SK-N-SH (cell line): ENCODE measurements at regions of chr17 and their contacts with region 1.

Region 1: DNA sequence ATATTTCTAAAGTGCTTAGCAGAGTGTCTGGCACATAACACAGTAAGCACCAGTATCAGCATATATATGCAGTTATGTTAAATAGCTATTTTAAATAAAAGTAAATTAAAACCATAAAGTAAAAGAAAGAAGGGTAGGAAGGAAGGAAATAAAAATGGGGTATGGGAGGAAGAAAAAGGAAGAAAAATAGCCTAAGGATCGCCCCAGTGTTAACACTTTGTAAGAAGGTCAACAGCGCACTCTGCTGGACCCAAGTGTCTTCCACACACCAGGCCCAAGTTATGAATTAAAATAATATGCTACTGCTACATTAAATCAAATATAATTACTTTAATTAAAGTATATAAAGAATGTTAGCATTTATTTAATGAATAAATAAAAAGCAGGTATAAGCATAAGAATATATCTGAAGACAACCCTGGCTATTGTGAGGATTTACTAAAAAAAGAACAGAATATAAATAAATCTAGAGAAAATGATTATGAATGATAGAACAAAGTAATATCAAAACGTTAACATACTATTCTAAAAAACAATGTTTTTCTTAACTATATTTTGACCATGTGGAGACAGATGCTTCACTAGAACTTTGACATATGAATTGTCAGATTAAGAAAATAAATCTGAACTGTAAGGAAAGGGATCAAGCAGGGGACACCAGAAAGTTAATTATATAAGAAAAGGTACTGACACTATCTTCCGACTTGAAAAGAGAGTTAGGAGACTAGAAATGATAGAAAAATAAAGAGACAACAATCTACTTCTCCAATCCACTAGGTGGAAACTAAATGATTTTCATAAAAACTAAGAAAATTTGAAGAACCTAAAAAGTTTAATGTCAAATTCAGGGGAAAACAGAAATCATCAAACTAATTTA is 25.9 kb downstream of the BRIP1 start:
- DNase-seq: peak; percentile 59
- H3K4me3 ChIP-seq: no peak overlapping the region
- H3K27ac ChIP-seq: no peak overlapping the region; a peak in 1 of 4 replicates
- H3K4me1 ChIP-seq: peaks cover 0 to 3% of the 10 kb centered on the region in 2 experiments; a peak in 2 of 4 replicates
- H3K27me3 ChIP-seq: no peaks in the 10 kb centered on the region
- CTCF ChIP-seq: peak; percentile 95
- EP300 ChIP-seq: no peak
- RAD21 ChIP-seq: peak; percentile 97

Region 2: DNA sequence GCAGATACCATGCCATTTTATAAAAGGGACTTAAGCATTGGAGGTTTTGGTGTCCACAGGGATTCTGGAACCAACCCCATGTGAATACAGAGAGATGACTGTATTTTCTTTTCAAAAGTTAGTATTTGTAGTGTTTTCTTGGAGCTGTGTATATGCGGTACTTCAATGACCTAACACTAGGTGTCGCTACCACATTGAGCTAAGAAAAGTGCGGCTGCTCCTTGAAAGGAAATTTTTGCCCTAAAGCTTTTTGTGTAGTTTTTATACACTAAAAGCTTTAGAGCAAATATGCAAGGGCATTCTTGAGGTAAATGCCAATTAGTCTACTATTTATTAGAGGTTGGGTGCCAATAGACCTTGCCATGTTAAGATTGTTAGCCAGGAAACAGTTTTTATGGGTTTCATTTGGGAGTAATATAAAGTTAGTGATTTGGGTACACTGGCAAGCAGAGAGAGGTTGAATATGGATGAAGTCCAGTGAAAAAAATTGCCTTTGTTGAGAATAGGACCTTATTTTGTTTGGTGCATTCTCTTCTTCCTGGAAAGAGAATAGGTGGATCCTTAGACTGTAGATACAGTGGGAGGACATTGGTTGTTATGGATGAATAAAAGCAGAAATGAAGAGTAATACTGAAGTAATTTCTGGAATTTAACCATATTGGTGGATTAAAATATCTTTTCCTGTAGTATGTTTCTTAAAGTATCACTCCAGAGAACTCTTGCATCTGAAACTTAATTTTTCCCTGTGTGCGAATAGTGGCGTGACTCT is 1116.5 kb before region 1 on chr17:
- CTCF ChIA-PET with region 1: interaction called, 14 read pairs
- POLR2A ChIA-PET with region 1: no interaction called
- DNase-seq: peak; percentile 66
- H3K4me3 ChIP-seq: peak overlapping the region in 1 of 2 experiments; percentile 25; a peak in 2 of 4 replicates
- H3K27ac ChIP-seq: peak overlapping the region; percentile 8 to 51; a peak in 2 of 4 replicates
- H3K4me1 ChIP-seq: peaks cover 0 to 5% of the 10 kb centered on the region in 2 experiments; a peak in 2 of 4 replicates
- H3K27me3 ChIP-seq: no peaks in the 10 kb centered on the region
- CTCF ChIP-seq: peak; percentile 100
- EP300 ChIP-seq: no peak
- RAD21 ChIP-seq: peak; percentile 98

Region 3: GRCh38 chr17:61635913-61636432 is 201.4 kb before region 1 on chr17:
- CTCF ChIA-PET with region 1: interaction called, 23 read pairs
- POLR2A ChIA-PET with region 1: no interaction called
- DNase-seq: peak; percentile 28
- H3K4me3 ChIP-seq: no peak overlapping the region
- H3K27ac ChIP-seq: no peak overlapping the region
- H3K4me1 ChIP-seq: no peaks in the 10 kb centered on the region
- H3K27me3 ChIP-seq: no peaks in the 10 kb centered on the region
- CTCF ChIP-seq: peak; percentile 93
- EP300 ChIP-seq: no peak
- RAD21 ChIP-seq: peak; percentile 97

Region 4: DNA sequence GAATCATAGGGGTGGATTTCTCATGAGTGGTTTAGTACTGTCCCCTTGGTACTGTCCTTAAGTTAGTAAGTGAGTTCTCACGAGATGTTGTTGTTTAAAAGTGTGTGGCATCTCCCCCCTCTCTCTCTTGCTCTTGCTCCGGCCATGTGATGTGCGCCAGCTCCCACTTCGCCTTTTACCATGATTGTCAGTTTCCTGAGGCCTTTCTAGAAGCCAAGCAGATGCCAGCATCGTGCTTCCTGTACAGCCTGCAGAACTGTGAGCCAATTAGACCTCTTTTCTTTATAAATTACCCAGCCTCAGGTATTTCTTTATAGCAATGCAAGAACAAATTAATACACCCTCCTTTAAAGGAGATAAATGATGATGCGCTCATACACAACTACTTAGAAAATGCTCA is 196.3 kb before region 1 on chr17:
- CTCF ChIA-PET with region 1: interaction called, 23 read pairs
- POLR2A ChIA-PET with region 1: no interaction called
- DNase-seq: no peak
- H3K4me3 ChIP-seq: no peak overlapping the region
- H3K27ac ChIP-seq: no peak overlapping the region
- H3K4me1 ChIP-seq: no peaks in the 10 kb centered on the region
- H3K27me3 ChIP-seq: no peaks in the 10 kb centered on the region
- CTCF ChIP-seq: no peak
- EP300 ChIP-seq: no peak
- RAD21 ChIP-seq: no peak

Region 5: GRCh38 chr17:61648587-61648986 is 188.8 kb before region 1 on chr17:
- CTCF ChIA-PET with region 1: interaction called, 17 read pairs
- POLR2A ChIA-PET with region 1: no interaction called
- DNase-seq: no peak
- H3K4me3 ChIP-seq: no peak overlapping the region
- H3K27ac ChIP-seq: no peak overlapping the region
- H3K4me1 ChIP-seq: peaks cover 0 to 6% of the 10 kb centered on the region in 2 experiments; a peak in 1 of 4 replicates
- H3K27me3 ChIP-seq: no peaks in the 10 kb centered on the region
- CTCF ChIP-seq: no peak
- EP300 ChIP-seq: no peak
- RAD21 ChIP-seq: no peak

Region 6: DNA sequence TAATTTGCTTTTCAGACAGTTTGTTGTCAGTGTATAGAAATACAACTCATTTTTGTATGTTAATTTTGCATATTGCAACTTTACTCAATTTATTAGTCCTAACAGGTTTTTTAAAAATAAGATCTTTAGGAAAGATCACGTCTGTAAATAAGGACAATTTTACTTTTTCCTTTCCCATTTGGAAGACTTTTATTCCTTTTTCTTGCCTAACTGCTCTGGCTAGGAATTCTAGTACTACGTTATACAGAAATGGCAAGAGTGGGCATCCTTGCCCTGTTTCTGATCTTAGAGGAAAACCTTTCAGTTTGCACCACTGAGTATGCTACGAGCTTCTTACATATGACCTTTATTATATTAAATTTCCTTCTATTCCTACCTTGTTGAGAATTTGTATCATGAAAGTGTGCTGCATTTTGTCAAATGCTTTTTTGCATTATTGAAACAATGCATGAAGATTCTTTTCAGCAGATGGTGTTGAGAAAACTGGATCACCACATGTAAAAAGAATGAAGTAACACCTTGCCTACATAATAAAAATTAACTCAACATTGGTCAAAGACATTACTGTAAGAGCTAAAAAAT is 87.5 kb before region 1 on chr17:
- CTCF ChIA-PET with region 1: no interaction called
- POLR2A ChIA-PET with region 1: no interaction called
- DNase-seq: no peak
- H3K4me3 ChIP-seq: no peak overlapping the region
- H3K27ac ChIP-seq: no peak overlapping the region
- H3K4me1 ChIP-seq: no peaks in the 10 kb centered on the region
- H3K27me3 ChIP-seq: no peaks in the 10 kb centered on the region
- CTCF ChIP-seq: no peak
- EP300 ChIP-seq: no peak
- RAD21 ChIP-seq: no peak

Region 7: DNA sequence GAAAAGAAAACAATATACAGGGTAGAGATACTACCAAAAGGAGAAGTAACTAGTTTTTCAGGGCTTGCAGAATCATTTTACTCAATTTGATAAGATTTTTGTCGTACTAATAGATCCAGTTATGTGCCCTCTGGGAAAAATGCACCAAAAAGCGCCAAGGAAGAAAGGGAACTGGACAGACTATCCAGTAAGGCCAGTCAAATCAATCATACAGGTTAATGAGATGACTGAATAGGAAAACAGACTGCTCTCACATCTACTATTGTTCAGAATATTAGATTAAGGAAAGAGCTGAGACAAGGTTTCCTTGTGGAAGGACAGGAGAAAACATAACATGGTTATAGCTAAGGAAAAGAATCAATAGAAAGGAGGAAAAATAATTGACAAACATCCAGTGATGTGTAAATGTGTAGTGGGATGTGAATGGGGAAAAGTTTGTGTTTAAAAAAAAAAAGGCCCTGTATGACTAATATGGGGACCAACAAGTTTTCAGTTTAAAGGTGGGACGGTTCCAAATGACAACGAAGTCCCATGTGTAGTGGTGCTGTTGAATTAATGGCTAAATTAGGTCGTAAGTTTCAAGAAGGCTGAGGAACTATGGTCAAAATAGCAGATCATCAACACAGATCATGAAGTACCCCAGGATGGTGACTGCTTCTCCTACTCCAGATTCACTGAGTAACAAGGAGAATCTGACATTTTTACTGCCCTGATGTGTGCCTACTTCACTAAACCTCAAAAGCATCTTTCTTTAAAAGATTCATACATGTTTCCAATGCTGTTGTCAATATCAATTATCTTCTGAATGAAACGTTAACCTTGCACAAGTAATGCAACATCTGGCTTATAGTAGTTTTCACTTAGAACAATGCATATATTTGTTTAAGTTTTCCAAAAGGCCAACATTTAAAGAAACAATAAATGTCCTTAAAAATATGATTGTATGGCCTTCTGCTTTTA is 14.8 kb before region 1 on chr17:
- CTCF ChIA-PET with region 1: interaction called, 10 read pairs
- POLR2A ChIA-PET with region 1: no interaction called
- DNase-seq: no peak
- H3K4me3 ChIP-seq: no peak overlapping the region
- H3K27ac ChIP-seq: peak overlapping the region in 1 of 2 experiments; percentile 5; a peak in 1 of 4 replicates
- H3K4me1 ChIP-seq: no peaks in the 10 kb centered on the region
- H3K27me3 ChIP-seq: no peaks in the 10 kb centered on the region
- CTCF ChIP-seq: no peak
- EP300 ChIP-seq: no peak
- RAD21 ChIP-seq: no peak

Region 8: DNA sequence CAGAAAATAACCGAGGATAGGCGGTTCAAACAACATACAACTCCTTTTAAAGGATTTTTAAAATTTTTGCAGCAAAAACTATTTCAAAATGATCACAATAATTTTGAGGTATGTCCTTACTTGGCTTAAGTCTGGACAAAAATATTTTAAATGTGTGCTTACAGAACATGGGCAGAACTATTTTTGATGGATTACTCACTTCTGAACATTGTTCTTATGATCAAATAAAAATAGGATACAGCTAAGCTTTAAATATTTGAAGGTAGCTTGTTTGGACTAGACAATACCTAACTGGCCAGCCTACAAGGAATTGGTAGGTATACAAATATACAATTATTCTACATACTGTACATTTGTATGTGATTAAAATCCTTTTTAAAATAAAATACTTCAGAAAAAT is 104.7 kb after region 1 on chr17:
- CTCF ChIA-PET with region 1: no interaction called
- POLR2A ChIA-PET with region 1: no interaction called
- DNase-seq: no peak
- H3K4me3 ChIP-seq: no peak overlapping the region
- H3K27ac ChIP-seq: no peak overlapping the region
- H3K4me1 ChIP-seq: no peaks in the 10 kb centered on the region
- H3K27me3 ChIP-seq: no peaks in the 10 kb centered on the region
- CTCF ChIP-seq: no peak
- EP300 ChIP-seq: no peak
- RAD21 ChIP-seq: no peak